PC-9 (cell line): ENCODE measurements at regions of chr12 and their contacts with region 1.

Region 1: DNA sequence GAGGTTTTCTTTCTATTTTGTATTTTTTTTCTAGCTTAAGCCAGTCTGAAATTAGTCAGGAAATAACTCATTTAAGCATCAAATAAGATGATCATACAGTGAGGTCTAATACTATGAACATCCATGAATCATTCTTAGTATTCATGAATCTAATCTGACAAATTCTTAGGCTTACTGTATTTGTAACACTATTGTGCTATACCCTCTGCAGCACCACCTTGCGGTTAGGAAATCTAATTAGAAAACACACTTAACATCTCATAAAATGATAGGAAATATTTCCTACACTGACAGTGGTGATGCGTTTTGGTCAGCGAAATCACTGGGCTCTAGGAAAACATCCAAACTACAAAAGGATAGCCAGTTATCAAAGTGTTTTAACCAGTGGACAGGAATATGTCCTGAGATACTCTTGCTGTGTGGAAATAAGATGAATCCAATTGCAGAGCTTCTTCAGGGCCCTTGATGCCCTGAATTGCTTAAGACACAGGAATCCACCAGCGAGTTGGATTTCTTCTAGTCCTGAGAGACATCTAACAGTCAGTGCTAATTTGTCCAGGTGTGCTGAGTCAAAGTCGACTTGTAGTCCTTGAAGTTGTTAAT is 109.3 kb upstream of the MYF6 start:
- DNase-seq: no peak
- H3K4me3 ChIP-seq: no peak overlapping the region
- H3K27ac ChIP-seq: no peak overlapping the region
- H3K4me1 ChIP-seq: no peaks in the 10 kb centered on the region
- H3K27me3 ChIP-seq: no peaks in the 10 kb centered on the region
- CTCF ChIP-seq: peak; percentile 32; the same call in 1 of the 2 replicates

Region 2: GRCh38 chr12:80622271-80622670 is 24.2 kb after region 1 on chr12:
- CTCF ChIA-PET with region 1: no interaction called
- POLR2A ChIA-PET with region 1: interaction called, 10 read pairs
- intact Hi-C with region 1: no loop called
- DNase-seq: no peak
- H3K4me3 ChIP-seq: no peak overlapping the region
- H3K27ac ChIP-seq: no peak overlapping the region
- H3K4me1 ChIP-seq: no peaks in the 10 kb centered on the region
- H3K27me3 ChIP-seq: no peaks in the 10 kb centered on the region
- CTCF ChIP-seq: no peak